ENCODE measurements at regions of chr5 and their contacts with region 1.

Region 1: GRCh38 chr5:81301271-81302015 is at the start of gene ZCCHC9:
- DNase-seq: peak; percentile 90
- ATAC-seq: peak; percentile 96
- H3K4me3 ChIP-seq: peak within 1 kb of the TSS; percentile 93 to 95 (median 94)
- H3K27ac ChIP-seq: peak within 1 kb of the TSS; percentile 89
- H3K4me1 ChIP-seq: peaks cover 35% of the 10 kb centered on the region
- H3K27me3 ChIP-seq: no peaks in the 10 kb centered on the region; a peak in 1 of 5 replicates
- CTCF ChIP-seq: peak; percentile 84
- EP300 ChIP-seq: no peak; a peak in 1 of 4 replicates
- POLR2A ChIP-seq: peak; percentile 94 to 97
- RAD21 ChIP-seq: peak; percentile 43; the same call in 1 of the 2 replicates
- total RNA-seq, gene ZCCHC9: 52.5 and 70.7 TPM in 2 replicates

Region 2: DNA sequence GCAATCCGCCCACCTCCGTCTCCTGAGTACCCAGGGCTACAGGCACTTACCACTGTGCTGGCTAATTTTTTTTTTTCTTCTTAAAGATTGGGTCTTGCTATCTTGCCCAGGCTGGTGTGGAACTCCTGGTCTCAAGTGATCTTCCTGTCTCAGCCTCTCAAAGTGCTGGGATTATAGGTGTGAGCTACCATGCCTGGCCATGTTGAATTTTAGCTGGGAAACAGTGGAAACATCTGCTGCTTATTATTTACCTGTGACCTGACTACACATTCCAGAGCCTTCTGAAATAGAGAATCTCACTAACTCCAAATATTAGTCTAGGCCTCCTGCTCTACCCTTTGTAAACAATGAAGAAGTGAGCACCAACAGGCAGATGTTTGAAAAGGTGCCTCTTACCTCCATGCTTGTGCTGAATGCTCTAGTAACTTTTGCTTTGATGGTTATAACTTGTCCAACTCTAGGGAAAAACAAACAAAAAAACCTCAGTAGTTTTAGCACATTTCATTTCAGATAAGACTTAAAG is 70.0 kb after region 1 on chr5:
- CTCF ChIA-PET with region 1: no interaction called
- POLR2A ChIA-PET with region 1: interaction called, 11 read pairs
- in situ Hi-C with region 1: no loop called
- intact Hi-C with region 1: loop called (anchors 5 kb)
- DNase-seq: peak; percentile 81
- ATAC-seq: peak; percentile 99
- H3K4me3 ChIP-seq: peak overlapping the region in 1 of 3 experiments; percentile 25; a peak in 1 of 6 replicates
- H3K27ac ChIP-seq: peak overlapping the region; percentile 51
- H3K4me1 ChIP-seq: peaks cover 57% of the 10 kb centered on the region
- H3K27me3 ChIP-seq: no peaks in the 10 kb centered on the region
- CTCF ChIP-seq: no peak
- EP300 ChIP-seq: peak in 1 of 2 experiments; percentile 93; a peak in 2 of 4 replicates
- POLR2A ChIP-seq: no peak
- RAD21 ChIP-seq: no peak

Measured in HepG2 (cell line).